Activated T-helper 1 cell treated with anti-CD3 and anti-CD28 coated beads, Interleukin-12 subunit alpha, Interleukin-12 subunit beta, Interleukin-2, Interleukin-4 antibody, amounts not matched to agents 30 ng/mL and 10 ng/mL and 1 ng/mL, durations not matched to agents 14 hours and 24 hours and 36 hours (primary cell): ENCODE measurements at regions of chr2 and their contacts with region 1.

Region 1: GRCh38 chr2:189142893-189143759 is 36.4 kb downstream of the COL5A2 start:
- DNase-seq: peak; percentile 5
- H3K4me3 Mint-ChIP-seq: no peak overlapping the region
- H3K27ac Mint-ChIP-seq: no peak overlapping the region
- H3K4me1 Mint-ChIP-seq: no peaks in the 10 kb centered on the region
- H3K27me3 Mint-ChIP-seq: no peaks in the 10 kb centered on the region

Region 2: GRCh38 chr2:188725746-188726360 is 417.3 kb before region 1 on chr2:
- intact Hi-C with region 1: no loop called
- DNase-seq: no peak
- H3K4me3 Mint-ChIP-seq: no peak overlapping the region
- H3K27ac Mint-ChIP-seq: no peak overlapping the region
- H3K4me1 Mint-ChIP-seq: no peaks in the 10 kb centered on the region
- H3K27me3 Mint-ChIP-seq: no peaks in the 10 kb centered on the region

Region 3: GRCh38 chr2:189179570-189179950 is 36.4 kb after region 1 on chr2 and contains the start of gene COL5A2:
- intact Hi-C with region 1: no loop called
- DNase-seq: no peak
- H3K4me3 Mint-ChIP-seq: no peak within 1 kb of the TSS
- H3K27ac Mint-ChIP-seq: no peak within 1 kb of the TSS
- H3K4me1 Mint-ChIP-seq: no peaks in the 10 kb centered on the region
- H3K27me3 Mint-ChIP-seq: peaks cover 3% of the 10 kb centered on the region
- total RNA-seq, gene COL5A2: 0.08 and 0.22 TPM in 2 replicates

Region 4: GRCh38 chr2:189347540-189347939 is 204.4 kb after region 1 on chr2:
- intact Hi-C with region 1: loop called (anchors 1 kb)
- DNase-seq: no peak
- H3K4me3 Mint-ChIP-seq: no peak overlapping the region
- H3K27ac Mint-ChIP-seq: no peak overlapping the region
- H3K4me1 Mint-ChIP-seq: peaks cover 5% of the 10 kb centered on the region
- H3K27me3 Mint-ChIP-seq: no peaks in the 10 kb centered on the region

Region 5: DNA sequence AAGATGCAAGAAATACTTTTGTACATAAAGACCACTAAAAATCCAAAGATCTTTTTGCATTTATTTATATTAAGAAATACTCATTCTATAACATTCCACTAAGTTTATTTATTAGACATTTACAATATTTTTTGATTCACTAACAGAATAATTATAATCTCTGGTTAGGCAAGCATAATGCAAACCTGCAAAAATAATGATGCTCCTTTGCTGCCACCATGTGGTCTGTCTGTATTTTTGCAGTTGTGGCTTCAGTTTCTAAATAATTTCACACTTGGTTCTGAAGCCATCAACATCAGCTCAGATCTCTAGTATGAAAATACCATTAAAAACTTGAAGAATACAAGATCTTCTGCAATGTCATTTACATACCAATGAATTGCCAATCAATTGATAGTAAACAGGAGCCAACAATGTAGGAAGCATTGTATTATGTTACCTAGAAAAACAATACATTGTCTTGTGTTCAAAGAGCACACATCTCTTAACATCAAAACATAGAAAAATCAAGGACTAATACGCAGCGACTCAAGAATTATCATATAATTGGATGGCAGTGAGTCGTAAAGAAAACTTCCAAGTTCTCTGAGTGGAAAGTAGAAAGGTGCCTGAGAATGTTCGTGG is 269.3 kb after region 1 on chr2:
- intact Hi-C with region 1: loop called (anchors 1 kb)
- DNase-seq: peak; percentile 14
- H3K4me3 Mint-ChIP-seq: no peak overlapping the region
- H3K27ac Mint-ChIP-seq: no peak overlapping the region
- H3K4me1 Mint-ChIP-seq: peaks cover 9% of the 10 kb centered on the region
- H3K27me3 Mint-ChIP-seq: no peaks in the 10 kb centered on the region